Right ventricle myocardium superior (tissue), 1 donor: ENCODE measurements at regions of chr9 and their contacts with region 1.

Region 1: DNA sequence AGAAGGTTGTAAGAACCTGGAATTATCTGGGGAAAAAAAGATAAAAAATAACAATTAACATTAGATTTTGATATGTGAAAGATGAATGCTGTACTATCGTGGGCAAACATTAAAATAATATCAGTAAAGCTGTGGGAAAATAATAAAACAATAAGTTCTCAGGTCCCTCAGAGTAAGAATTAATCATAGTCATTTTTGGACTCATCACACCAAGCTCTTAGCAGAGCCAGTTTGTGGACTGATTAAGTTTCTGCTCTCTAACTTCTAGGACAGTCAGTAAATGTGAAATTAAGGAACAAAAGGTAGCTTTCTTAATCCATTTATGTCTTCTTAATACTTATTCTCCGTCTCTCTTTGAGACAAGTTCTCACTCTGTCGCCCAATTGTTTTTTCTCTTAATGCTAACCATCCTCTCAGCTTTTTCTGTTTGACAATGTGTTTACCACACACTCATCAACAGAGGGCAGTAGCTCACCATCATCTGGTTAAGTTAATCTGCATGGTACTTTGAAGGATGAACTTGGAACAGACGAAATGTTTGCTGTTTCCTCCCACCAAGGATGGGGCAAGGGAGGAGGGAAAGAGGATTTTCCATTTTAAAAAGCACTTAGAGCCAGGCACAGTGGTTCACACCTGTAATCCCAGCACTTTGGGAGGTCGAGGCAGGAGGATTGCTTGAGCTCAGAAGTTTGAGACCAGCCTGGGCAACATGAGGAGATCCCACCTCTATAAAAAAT is 5.3 kb upstream of the ACO1 start:
- DNase-seq: no peak
- ATAC-seq: peak; percentile 95

Region 2: DNA sequence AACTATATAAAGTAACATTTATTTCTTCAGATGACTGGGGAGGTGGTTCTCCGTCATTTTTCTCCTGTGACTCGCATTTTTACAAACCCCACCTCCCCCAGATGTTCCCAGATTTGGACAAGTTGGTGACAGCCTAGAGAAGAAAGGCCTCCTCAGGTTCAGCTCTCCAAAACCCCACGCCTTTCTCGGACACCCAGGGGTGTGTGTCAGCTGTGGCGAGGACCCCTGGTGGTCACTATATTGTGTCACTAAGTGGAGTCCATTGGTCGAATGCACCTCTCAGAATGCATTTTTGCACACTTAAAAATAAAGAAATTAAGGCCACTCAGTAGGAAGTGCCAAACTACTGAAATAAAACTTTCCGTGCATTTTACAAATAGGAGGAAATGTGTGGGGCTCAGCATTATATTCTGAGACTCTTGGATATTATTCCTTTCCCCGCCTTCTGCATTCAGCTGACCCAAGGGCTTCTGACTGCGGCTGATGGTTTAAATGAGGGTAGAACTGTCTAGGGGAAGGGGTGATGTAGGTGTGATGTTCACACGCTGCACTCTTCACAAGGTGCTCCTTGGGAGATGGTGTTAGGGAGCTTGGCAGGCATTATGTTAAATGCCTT is 52.9 kb after region 1 on chr9:
- intact Hi-C with region 1: loop called (anchors 5 kb)
- DNase-seq: no peak
- ATAC-seq: peak; percentile 68

Region 3: DNA sequence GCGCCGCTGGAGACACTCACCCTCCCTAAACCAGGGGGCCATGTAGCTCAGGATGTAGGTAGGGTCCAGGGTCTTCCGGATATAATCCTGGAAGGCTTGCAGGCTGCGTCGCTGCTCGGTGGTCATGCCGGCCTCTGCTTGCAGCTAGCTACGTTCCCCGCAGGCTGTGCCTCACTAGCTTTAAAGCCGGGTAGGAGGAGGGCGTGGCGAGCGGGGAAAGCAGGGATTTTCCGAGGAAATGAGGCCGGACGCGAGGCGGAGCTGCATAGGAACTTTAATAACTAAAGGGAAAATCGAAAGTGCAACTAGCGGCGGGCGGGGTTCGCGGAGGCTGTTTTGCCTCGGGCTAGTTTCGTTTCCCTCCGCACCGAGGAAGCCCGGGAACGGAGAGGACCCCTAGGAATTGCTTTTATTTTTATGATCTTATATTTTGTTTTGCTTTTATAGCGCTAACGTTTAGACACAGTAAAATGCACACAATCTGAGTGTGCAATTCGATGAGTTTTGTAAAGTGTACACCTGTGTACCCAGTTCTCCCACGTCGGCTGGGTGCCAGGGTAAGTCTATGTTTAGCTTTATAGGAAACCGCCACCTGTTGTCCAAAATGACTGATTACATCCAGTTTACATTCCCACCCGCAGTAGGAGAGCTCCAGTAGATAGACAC is 147.0 kb after region 1 on chr9 and contains the start of gene RIGI:
- intact Hi-C with region 1: loop called (anchors 2 kb)
- DNase-seq: peak; percentile 97
- ATAC-seq: peak; percentile 96
- total RNA-seq, gene RIGI: 3.1 TPM

Region 4: GRCh38 chr9:32579706-32580331 is 200.7 kb after region 1 on chr9:
- intact Hi-C with region 1: loop called (anchors 2 kb)
- DNase-seq: peak; percentile 79
- ATAC-seq: peak; percentile 68

Region 5: DNA sequence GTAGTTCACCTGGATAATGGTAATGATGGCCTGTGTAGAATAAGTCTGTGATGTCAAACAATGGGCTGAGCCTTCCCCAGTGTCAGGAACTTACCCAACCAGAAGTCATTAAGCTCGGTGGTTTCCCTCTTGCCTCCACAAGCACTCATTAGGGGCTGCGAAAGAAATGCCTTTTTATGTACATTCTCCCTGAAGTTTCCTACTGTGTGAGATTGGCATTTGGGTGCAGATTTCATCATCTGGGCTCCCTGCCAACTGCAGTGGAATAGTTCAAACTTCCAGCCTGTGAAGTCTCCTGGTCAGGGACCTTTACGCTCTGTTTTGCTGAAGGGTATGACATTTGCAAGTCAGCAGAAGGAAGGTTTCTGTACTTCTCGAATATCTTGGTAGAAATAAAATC is 362.5 kb after region 1 on chr9:
- intact Hi-C with region 1: no loop called
- DNase-seq: no peak
- ATAC-seq: no peak

Region 6: GRCh38 chr9:32965999-32966722 is 587.0 kb after region 1 on chr9:
- intact Hi-C with region 1: loop called (anchors 10 kb)
- DNase-seq: no peak
- ATAC-seq: no peak